ENCODE measurements at regions of chr15 and their contacts with region 1.

Region 1: DNA sequence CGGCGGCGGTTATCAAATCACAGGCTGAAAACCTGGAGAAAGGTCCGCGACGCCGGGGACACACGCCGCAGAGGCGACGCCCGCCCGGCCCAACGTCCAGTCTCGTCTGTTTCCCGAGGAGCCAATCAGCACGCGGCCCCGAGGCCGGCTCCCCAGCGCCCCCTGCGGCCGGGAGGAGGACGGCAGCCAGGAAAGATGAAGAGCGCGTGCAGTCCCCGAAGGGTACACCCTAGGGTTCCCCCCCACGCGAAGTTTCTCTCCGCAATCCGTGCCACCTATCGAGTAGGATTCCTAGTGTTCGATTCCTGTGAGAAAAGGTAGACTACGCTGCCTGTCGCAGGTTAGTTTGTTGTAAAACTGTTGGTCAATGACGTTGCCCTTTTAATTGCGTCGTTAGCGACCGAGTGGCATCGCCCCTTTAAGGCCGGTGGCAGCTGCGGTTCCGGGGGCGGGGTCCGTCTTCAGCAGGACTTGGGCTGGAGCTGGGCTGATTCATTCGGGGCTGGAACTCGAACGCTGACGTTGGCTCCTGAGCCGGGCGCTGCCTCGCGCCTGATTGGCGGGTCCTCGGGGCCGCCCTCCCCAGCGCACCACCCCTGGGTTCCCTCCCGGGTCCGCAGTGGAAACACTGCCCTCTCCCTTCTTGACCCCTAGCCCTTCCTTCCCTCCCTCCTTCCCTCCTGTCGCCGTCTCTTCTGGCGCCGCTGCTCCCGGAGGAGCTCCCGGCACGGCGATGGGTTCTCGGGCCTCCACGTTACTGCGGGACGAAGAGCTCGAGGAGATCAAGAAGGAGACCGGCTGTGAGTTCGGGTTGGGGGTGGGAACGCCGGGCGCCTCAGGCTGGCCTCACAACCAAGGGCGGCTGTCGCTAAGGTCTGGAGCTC is at the starts of genes CHP1 and EXD1:
- DNase-seq: peak; percentile 98 to 99 (median 99)
- ATAC-seq: peak; percentile 97
- H3K4me3 ChIP-seq: peak within 1 kb of the TSS; percentile 75
- H3K27ac ChIP-seq: peak within 1 kb of the TSS; percentile 93
- H3K4me1 ChIP-seq: peaks cover 20 to 31% of the 10 kb centered on the region in 2 experiments
- H3K27me3 ChIP-seq: no peaks in the 10 kb centered on the region
- CTCF ChIP-seq: peak; percentile 89 to 97 (median 89)
- EP300 ChIP-seq: peak; percentile 36; the same call in 1 of the 2 replicates
- POLR2A ChIP-seq: peak; percentile 83
- RAD21 ChIP-seq: peak in 1 of 2 experiments; percentile 36; a peak in 1 of 4 replicates
- polyA plus RNA-seq, gene CHP1: 75.8 to 83.4 TPM
- polyA plus RNA-seq, gene EXD1: not detected

Region 2: DNA sequence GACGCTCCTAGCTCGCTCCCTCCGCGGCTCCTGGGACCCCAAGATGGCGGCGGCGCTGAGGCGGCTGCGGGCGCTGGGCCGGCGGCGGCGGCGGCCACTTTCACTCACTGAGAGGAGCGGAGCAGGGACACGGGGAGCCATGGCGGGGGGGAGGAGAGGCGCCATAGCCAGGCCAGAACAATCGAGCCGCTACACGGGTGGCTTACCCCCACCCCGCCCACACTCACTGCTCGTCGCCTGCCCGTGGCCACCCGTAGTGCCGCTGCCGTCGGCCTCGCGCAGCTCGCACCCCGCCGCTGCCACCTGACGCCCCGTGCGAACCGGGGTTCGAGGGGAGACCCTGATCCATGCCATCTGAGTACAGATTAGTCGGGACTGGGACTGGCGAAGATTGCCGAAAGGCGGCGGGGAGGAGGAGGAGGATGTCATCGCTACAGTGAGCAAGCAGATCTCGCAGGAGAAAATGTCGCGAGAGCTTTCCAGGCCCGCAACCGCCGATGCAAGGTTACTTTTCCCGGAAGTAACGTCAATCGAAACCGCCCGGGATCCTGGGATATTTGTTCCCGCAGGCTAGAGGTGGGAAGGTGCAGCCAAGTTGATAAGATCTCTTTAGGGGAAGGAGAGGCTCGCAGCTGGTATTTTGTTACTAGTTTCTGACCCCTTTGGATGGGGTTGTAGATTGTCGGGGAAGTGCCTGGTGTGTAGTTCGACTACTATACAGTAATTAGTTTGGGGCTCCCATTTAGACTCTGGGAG is 114.6 kb before region 1 on chr15 and contains the start of gene INO80:
- CTCF ChIA-PET with region 1: no interaction called
- POLR2A ChIA-PET with region 1: interaction called, 4 read pairs
- in situ Hi-C with region 1: no loop called
- intact Hi-C with region 1: loop called (anchors 2 kb)
- DNase-seq: peak; percentile 87 to 98 (median 90)
- ATAC-seq: peak; percentile 89
- H3K4me3 ChIP-seq: peak within 1 kb of the TSS; percentile 89
- H3K27ac ChIP-seq: peak within 1 kb of the TSS; percentile 100
- H3K4me1 ChIP-seq: peaks cover 5 to 12% of the 10 kb centered on the region in 2 experiments; a peak in 4 of 5 replicates
- H3K27me3 ChIP-seq: no peaks in the 10 kb centered on the region
- CTCF ChIP-seq: no peak
- EP300 ChIP-seq: peak; percentile 72
- POLR2A ChIP-seq: peak; percentile 88
- RAD21 ChIP-seq: no peak
- polyA plus RNA-seq, gene INO80: 1.1 to 3.9 TPM

Region 3: DNA sequence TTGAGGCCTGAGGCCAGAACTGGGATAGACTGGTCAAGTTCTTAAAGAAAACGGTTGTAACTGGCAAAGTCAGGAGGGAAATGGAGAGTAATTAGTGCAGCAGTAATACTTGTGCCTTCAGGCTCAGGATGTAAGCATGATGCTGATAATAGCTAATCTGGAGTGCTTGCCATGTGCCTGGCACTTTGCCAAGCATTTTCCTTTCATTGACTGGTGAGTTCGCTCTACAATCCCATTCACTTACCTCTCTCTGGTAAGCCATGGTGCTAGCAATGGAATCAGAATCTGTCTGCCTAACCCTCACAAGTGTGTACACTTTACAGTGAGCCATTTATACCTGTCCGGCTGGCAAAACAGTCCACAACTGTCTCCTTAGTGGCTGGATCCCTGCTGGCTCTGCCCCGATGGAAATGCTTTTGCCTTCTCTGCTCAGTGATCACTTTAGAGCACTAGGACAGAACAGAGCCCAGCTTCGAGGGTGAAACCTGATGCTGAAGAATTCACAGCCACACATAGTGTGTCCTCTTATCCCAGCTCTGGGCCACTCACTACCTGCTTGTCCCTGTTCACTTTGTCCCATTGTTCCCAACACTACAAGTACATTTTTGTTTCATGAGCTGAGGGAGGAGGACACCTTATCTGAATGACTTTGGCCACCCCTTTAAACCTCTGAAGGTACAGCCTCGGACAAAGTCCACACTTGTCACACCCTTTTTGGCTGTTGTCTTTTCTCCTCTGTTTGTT is 10.5 kb after region 1 on chr15:
- CTCF ChIA-PET with region 1: no interaction called
- POLR2A ChIA-PET with region 1: interaction called, 14 read pairs
- in situ Hi-C with region 1: no loop called
- intact Hi-C with region 1: no loop called
- DNase-seq: peak; percentile 17 to 62 (median 28)
- ATAC-seq: peak; percentile 74
- H3K4me3 ChIP-seq: no peak overlapping the region
- H3K27ac ChIP-seq: peak overlapping the region; percentile 24
- H3K4me1 ChIP-seq: peaks cover 4 to 10% of the 10 kb centered on the region in 2 experiments; a peak in 4 of 5 replicates
- H3K27me3 ChIP-seq: no peaks in the 10 kb centered on the region
- CTCF ChIP-seq: no peak
- EP300 ChIP-seq: no peak
- POLR2A ChIP-seq: no peak
- RAD21 ChIP-seq: no peak

Region 4: DNA sequence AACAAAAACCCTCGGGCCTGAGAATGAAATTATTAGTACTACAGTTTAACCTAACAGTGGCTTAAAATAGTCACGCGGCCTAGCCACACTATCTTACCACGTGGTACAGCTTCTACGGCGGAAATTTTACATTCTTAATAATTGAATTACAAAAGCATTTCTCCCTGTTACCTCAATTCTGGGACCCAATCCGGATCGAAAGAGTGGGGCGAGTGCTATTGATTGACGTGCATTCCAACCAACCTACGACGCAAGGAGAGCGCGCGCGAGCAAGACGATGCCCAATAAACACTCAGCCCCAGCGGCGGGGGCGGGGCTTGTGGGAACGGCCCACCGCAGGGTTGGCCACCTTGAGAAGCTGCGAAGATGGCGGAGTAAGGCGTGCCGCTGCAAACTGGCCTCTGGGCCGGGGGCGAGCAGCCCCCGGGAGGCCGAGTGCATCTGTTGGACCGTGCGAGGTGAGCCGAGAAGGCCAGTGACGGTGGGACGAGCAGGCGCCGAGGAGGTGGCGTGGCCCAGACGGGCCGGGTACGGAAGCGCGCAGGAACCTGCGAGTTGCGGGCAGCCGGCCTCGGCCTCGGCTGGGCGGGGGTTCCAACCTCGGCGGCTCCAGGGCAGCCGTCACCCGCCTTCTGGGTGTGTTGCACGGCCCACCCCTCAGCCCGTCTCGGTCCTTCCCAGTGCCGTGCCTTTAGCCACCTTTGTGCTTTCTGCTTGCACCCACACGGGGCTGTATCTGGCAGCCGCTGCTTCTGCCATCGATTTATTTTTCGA is 52.9 kb after region 1 on chr15:
- CTCF ChIA-PET with region 1: no interaction called
- POLR2A ChIA-PET with region 1: no interaction called
- in situ Hi-C with region 1: no loop called
- intact Hi-C with region 1: loop called (anchors 2 kb)
- DNase-seq: peak; percentile 99 to 100 (median 99)
- ATAC-seq: peak; percentile 99
- H3K4me3 ChIP-seq: peak overlapping the region; percentile 87
- H3K27ac ChIP-seq: peak overlapping the region; percentile 98
- H3K4me1 ChIP-seq: peaks cover 8 to 12% of the 10 kb centered on the region in 2 experiments; a peak in 4 of 5 replicates
- H3K27me3 ChIP-seq: no peaks in the 10 kb centered on the region
- CTCF ChIP-seq: no peak
- EP300 ChIP-seq: no peak
- POLR2A ChIP-seq: peak; percentile 97
- RAD21 ChIP-seq: no peak

Region 5: DNA sequence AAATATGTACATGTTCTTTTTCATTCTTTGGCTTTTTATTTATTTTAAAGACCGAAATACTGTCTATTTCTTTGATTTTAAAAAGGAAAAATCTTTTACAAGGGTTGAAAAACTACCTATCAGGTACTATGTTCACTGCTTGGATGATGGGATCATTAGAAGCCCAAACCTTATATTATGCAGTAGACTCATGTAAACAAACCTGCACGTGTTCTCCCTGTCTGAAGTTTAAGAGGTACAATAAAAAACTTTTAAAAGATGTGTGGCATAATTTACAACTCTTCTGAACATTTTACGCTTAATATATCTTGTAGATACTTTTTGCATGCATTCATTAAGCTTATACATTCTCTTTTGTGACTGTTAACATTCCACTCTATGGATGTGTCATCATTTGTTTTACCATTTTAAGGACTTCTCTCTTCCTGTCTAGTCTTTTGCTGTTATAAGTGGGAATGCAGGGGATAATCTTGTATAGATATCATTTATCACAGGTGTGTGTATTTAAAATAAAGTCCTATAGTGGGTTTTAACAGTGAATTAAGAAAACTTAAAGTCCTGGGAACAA is 435.5 kb after region 1 on chr15:
- CTCF ChIA-PET with region 1: no interaction called
- POLR2A ChIA-PET with region 1: no interaction called
- in situ Hi-C with region 1: no loop called
- intact Hi-C with region 1: no loop called
- DNase-seq: no peak
- ATAC-seq: no peak
- H3K4me3 ChIP-seq: no peak overlapping the region
- H3K27ac ChIP-seq: no peak overlapping the region
- H3K4me1 ChIP-seq: peaks cover 8 to 10% of the 10 kb centered on the region in 2 experiments; a peak in 3 of 5 replicates
- H3K27me3 ChIP-seq: no peaks in the 10 kb centered on the region
- CTCF ChIP-seq: no peak
- EP300 ChIP-seq: no peak
- POLR2A ChIP-seq: no peak
- RAD21 ChIP-seq: no peak

Region 6: GRCh38 chr15:41790756-41791546 is 560.1 kb after region 1 on chr15:
- CTCF ChIA-PET with region 1: no interaction called
- POLR2A ChIA-PET with region 1: no interaction called
- in situ Hi-C with region 1: no loop called
- intact Hi-C with region 1: no loop called
- DNase-seq: peak in 2 of 4 experiments; percentile 65 to 78
- ATAC-seq: peak; percentile 78
- H3K4me3 ChIP-seq: peak overlapping the region; percentile 4
- H3K27ac ChIP-seq: peak overlapping the region; percentile 64
- H3K4me1 ChIP-seq: peaks cover 30 to 53% of the 10 kb centered on the region in 2 experiments
- H3K27me3 ChIP-seq: no peaks in the 10 kb centered on the region
- CTCF ChIP-seq: no peak
- EP300 ChIP-seq: peak; percentile 61
- POLR2A ChIP-seq: no peak
- RAD21 ChIP-seq: no peak